Activated CD4-positive, alpha-beta T cell treated with anti-CD3 and anti-CD28 coated beads for 36 hours (primary cell): ENCODE measurements at regions of chr11 and their contacts with region 1.

Region 1: GRCh38 chr11:46984987-46985386 is 48.4 kb downstream of the CSTPP1 start:
- DNase-seq: no peak
- ATAC-seq: no peak
- H3K4me3 Mint-ChIP-seq: no peak overlapping the region
- H3K27ac Mint-ChIP-seq: no peak overlapping the region
- H3K4me1 Mint-ChIP-seq: peaks cover 9% of the 10 kb centered on the region
- H3K27me3 Mint-ChIP-seq: no peaks in the 10 kb centered on the region

Region 2: DNA sequence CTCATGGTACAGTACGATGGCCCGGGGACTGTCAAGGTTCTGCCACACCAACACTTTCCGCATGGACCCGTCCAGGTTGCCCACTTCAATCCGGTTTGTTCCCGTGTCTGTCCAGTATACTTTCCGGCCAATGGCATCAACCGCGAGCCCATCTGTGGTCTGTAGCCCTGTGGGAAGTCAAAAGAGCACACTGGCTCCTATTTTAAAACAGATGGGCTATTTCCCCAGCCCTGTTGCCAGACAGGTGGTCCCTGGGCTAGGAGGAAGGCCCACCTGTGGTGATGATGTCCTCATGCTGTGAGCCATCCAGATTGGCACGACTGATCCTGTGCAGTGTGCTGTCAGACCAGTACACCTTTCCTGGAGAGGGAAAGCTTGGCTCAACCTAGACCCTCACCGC is 108.5 kb before region 1 on chr11:
- CTCF ChIA-PET with region 1: no interaction called
- POLR2A ChIA-PET with region 1: no interaction called
- intact Hi-C with region 1: no loop called
- DNase-seq: no peak
- ATAC-seq: no peak
- H3K4me3 Mint-ChIP-seq: no peak overlapping the region
- H3K27ac Mint-ChIP-seq: no peak overlapping the region
- H3K4me1 Mint-ChIP-seq: no peaks in the 10 kb centered on the region
- H3K27me3 Mint-ChIP-seq: no peaks in the 10 kb centered on the region

Region 3: DNA sequence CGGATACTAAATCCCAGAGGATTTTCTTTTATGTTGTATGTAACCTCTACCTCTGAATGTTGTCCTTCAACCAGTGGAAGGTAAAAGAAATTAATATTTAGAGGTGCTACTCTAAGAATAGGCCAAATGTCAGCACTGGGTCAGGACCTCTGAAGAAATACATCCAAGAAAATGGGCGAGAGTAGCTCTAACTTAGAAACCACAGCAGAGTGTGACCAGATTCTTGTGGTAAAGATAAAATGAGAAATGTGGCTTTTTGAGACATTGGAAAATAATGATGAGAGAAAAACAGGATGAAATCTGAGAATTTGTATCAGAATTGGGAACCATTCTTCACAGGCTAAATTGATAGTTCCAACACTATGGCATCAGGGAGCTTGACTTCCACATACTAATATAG is 15.0 kb after region 1 on chr11:
- CTCF ChIA-PET with region 1: interaction called, 12 read pairs
- POLR2A ChIA-PET with region 1: no interaction called
- intact Hi-C with region 1: no loop called
- DNase-seq: no peak
- ATAC-seq: no peak
- H3K4me3 Mint-ChIP-seq: no peak overlapping the region
- H3K27ac Mint-ChIP-seq: no peak overlapping the region
- H3K4me1 Mint-ChIP-seq: peaks cover 35% of the 10 kb centered on the region
- H3K27me3 Mint-ChIP-seq: no peaks in the 10 kb centered on the region